ENCODE measurements at regions of chr10 and their contacts with region 1.

Region 1: DNA sequence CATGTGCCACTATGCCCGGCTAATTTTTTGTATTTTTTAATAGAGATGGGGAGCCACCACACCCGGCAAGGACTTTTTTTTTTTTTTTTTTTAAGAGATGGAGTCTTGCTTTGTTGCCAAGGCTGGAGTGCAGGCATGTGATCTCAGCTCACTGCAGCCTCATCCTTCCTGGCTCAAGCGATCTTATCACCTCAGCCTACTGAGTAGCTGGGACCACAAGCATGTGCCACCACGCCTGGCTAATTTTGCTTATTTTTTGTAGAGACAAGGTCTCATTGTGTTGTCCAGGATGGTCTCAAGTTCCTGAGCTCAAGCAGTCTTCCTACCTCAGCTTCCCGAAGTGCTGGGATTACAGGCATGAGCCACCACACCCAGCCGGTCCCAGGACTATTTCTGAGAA is 9.3 kb upstream of the MCU start:
- DNase-seq: no peak
- H3K4me3 ChIP-seq: no peak overlapping the region
- H3K4me3 Mint-ChIP-seq: no peak overlapping the region
- H3K27ac Mint-ChIP-seq: no peak overlapping the region
- H3K4me1 ChIP-seq: peaks cover 36% of the 10 kb centered on the region
- H3K4me1 Mint-ChIP-seq: peaks cover 46% of the 10 kb centered on the region
- H3K27me3 ChIP-seq: no peaks in the 10 kb centered on the region
- H3K27me3 Mint-ChIP-seq: no peaks in the 10 kb centered on the region
- CTCF ChIP-seq: no peak

Region 2: DNA sequence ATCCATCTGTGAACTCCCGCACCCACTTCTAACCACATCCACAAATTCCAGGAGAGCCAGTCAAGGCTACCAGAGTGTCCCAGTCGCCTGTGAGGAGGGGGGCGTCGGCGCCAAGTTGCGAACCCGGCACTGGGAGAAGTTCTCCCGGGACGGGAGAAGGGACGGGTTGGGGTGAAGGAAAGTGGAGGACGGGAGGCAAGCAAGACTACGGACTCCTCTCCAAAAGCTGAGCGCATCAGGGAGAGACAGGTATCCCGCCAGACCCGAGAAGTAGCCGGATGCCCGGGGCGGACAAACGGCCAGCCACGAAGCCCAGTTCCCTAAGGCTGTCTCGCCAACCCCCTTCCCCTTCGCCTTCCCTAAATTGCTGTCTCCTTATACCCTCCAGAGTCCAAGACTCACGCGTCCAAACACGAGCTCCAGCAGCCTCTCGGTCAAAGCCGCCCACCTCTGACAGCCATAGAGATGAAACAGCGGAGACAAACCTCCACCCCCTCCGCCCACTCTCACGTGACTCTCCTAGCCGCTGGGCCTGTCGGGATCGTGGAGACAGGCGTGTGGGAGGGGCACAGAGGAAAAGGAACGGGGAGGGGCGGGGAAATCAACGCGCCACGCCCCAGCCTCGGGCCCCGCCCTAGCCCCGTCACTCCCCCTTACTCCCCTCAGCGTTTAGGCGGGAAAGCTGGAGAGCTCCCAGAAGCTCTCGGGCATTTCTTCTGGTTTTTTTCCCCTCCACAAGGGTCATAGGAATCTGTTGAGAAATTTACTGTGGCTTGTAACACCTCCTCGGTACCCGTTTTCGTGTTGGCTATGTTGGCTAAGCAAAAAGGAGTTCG is 56.8 kb before region 1 on chr10 and contains the start of gene MICU1:
- CTCF ChIA-PET with region 1: no interaction called
- POLR2A ChIA-PET with region 1: interaction called, 12 read pairs
- intact Hi-C with region 1: no loop called
- DNase-seq: peak; percentile 98
- H3K4me3 ChIP-seq: peak within 1 kb of the TSS; percentile 59
- H3K4me3 Mint-ChIP-seq: peak within 1 kb of the TSS; percentile 75
- H3K27ac Mint-ChIP-seq: peak within 1 kb of the TSS; percentile 80
- H3K4me1 ChIP-seq: peaks cover 13% of the 10 kb centered on the region; the same call in 1 of the 2 replicates
- H3K4me1 Mint-ChIP-seq: peaks cover 8% of the 10 kb centered on the region
- H3K27me3 ChIP-seq: no peaks in the 10 kb centered on the region
- H3K27me3 Mint-ChIP-seq: no peaks in the 10 kb centered on the region
- CTCF ChIP-seq: no peak
- total RNA-seq, gene MICU1: 68.8 and 83.2 TPM in 2 replicates

Region 3: DNA sequence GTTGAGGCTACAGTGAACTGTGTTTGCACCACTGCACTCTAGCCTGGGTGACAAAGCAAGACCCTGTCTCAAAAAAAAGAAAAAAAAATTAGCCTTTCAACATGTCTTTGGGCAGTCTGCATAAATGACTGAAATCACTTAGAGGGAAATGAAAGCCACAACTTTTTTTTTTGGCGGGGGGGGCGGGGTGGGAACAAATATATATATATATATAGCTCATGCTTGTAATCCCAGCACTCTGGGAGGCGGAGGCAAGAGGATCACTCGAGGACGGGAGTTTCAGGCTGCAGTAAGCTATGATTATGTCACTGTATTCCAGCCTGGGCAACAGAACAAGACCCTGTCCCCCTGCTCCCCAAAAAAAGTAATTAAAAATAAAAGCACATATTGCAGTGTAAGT is 33.3 kb before region 1 on chr10:
- CTCF ChIA-PET with region 1: no interaction called
- POLR2A ChIA-PET with region 1: no interaction called
- intact Hi-C with region 1: no loop called
- DNase-seq: no peak
- H3K4me3 ChIP-seq: no peak overlapping the region
- H3K4me3 Mint-ChIP-seq: no peak overlapping the region
- H3K27ac Mint-ChIP-seq: no peak overlapping the region
- H3K4me1 ChIP-seq: no peaks in the 10 kb centered on the region
- H3K4me1 Mint-ChIP-seq: peaks cover 8% of the 10 kb centered on the region
- H3K27me3 ChIP-seq: no peaks in the 10 kb centered on the region
- H3K27me3 Mint-ChIP-seq: no peaks in the 10 kb centered on the region
- CTCF ChIP-seq: no peak